ENCODE measurements at regions of chr11 and their contacts with region 1.

Region 1: GRCh38 chr11:67317205-67317887 is 14.0 kb downstream of the SSH3 start:
- DNase-seq: peak; percentile 70
- H3K4me3 ChIP-seq: peak overlapping the region; percentile 77 to 86 (median 81)
- H3K27ac ChIP-seq: peak overlapping the region; percentile 96 to 99 (median 98)
- H3K4me1 ChIP-seq: peaks cover 32 to 80% (median 37%) of the 10 kb centered on the region in 3 donors
- H3K27me3 ChIP-seq: no peaks in the 10 kb centered on the region
- CTCF ChIP-seq: peak; percentile 93 to 99 (median 99)
- POLR2A ChIP-seq: peak in 3 of 4 donors; percentile 46 to 68 (median 67)

Region 2: DNA sequence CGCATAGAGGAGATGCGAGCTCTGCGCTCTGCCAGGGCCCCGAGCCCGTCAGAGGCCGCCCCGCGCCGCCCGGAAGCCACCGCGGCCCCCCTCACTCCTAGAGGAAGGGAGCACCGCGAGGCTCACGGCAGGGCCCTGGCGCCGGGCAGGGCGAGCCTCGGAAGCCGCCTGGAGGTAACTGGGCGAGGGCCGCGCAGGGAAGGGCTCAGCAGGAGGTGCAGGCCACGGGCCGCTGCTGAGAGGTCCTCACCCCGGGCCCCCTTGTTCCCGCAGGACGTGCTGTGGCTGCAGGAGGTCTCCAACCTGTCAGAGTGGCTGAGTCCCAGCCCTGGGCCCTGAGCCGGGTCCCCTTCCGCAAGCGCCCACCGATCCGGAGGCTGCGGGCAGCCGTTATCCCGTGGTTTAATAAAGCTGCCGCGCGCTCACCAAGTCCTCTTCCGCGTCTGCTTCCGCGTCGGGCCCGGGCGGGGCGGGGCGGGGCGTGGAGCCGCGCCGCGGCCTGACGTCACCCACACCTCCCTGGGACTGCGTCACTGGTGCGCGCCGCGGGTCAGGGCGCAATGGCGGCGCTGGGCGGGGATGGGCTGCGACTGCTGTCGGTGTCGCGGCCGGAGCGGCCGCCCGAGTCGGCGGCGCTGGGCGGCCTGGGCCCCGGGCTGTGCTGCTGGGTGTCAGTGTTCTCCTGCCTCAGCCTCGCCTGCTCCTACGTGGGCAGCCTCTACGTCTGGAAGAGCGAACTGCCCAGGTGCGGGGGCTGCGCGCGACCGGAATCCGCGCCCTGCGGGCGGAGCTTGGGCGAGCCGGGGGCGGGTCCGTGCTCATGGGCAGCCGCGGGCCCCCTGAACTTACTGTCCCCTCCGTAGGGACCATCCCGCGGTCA is 474.2 kb before region 1 on chr11 and contains the start of gene RCE1:
- intact Hi-C with region 1: no loop called
- DNase-seq: peak; percentile 56
- H3K4me3 ChIP-seq: peak within 1 kb of the TSS; percentile 71 to 94 (median 78)
- H3K27ac ChIP-seq: peak within 1 kb of the TSS; percentile 95 to 100 (median 99)
- H3K4me1 ChIP-seq: peaks cover 25 to 77% (median 34%) of the 10 kb centered on the region in 3 donors
- H3K27me3 ChIP-seq: no peaks in the 10 kb centered on the region
- CTCF ChIP-seq: no peak
- POLR2A ChIP-seq: peak in 3 of 4 donors; percentile 85 to 96 (median 94)
- total RNA-seq, gene RCE1: 8.9 to 29.7 (median 21.8) TPM

Region 3: DNA sequence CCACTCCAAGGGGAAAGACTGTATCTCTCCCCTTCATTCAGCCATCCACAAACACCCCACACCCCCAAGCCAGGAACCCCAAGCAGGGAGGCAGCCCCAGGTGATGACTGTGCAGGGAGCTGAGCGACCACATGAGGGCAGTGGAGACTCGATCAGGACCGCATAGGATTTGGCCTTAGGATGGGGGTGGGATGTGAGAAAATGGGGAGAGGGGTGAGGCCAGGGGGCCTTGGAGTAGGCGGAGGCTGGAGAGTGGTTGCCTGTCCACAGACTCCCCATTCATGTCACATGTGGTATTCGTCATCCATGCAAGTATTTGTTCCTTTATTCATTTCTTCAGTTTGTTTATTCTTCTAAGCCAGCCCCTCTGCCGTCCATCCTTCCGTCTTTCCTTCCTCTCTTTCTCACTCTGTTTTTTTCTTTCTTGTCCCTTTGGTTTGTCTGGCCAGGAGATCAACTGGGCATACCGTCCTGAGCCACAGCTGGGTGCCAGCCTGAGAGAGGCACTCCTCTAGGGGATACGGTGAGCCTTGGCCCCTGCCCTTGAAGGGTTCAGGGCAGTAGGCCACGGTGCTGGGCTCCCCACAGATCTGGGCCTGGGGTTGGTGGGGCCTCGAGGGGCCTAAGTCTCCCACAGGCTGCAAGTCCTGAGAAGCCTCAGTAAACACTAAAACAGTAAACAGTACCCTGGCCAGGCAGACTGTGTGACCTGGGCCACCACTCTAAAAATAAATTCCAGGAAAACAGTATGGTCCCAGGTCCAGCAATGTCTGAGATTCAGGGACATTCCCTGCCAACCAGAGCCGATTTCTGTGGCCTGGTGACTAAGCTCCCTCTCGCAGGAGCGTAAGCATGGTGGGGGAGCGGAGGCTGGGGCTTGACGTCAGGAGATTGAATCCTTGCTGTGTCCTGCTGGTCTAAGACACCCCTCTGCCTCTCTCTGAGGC is 263.2 kb before region 1 on chr11:
- intact Hi-C with region 1: loop called (anchors 10 kb)
- DNase-seq: no peak
- H3K4me3 ChIP-seq: no peak overlapping the region
- H3K27ac ChIP-seq: peak overlapping the region; percentile 13 to 92 (median 82)
- H3K4me1 ChIP-seq: peaks cover 23 to 68% (median 25%) of the 10 kb centered on the region in 3 donors
- H3K27me3 ChIP-seq: peaks cover 0 to 9% (median 0%) of the 10 kb centered on the region in 4 donors
- CTCF ChIP-seq: peak; percentile 41 to 77 (median 63)
- POLR2A ChIP-seq: no peak

Region 4: DNA sequence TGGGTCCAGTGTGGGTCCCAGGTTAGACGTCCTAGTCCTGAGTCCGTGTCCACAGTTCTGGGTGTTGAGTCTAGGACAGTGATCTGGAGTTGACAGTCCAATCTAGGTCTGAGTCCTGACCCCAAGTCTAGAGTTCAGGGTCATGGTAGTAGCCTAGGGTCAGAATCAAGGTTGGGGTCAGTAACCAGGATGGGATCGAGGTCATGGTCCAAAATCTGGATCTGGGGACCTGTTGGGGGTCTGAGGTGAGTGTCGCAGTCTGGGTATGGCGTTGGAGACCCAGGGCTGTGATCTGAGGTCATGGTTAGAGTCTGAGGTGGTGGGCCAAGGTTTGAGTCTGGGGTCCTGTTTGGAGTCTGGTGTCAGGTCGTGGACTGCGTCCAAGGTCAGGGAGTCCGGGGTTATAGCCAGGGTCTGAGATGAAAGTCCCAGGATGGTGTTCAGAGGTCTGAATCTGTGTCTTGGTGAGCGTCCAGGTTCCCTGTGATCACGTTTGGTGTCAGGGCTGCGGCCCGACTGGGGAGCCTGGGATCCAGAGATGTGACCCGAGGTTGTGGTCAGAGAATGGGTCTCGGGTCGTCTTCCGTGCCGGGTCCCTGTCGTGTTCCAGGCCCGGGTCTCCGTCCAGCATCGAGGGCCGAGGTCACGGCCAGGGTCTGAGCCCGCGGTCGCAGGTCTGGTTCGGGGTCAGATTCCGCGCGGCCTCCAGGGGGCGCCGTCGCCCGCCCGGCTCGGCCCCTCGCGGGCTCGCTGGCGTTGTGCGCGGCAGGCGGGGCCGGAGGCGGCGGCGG is 51.5 kb before region 1 on chr11:
- intact Hi-C with region 1: loop called (anchors 5 kb)
- DNase-seq: no peak
- H3K4me3 ChIP-seq: peak overlapping the region in 3 of 4 donors; percentile 19 to 99 (median 29)
- H3K27ac ChIP-seq: peak overlapping the region; percentile 90 to 97 (median 94)
- H3K4me1 ChIP-seq: peaks cover 77 to 93% (median 87%) of the 10 kb centered on the region in 3 donors
- H3K27me3 ChIP-seq: no peaks in the 10 kb centered on the region
- CTCF ChIP-seq: peak; percentile 64 to 95 (median 88)
- POLR2A ChIP-seq: no peak

Measured in esophagus squamous epithelium (tissue), 5 donors.